B cell (primary cell): ENCODE measurements at regions of chr1 and their contacts with region 1.

Region 1: GRCh38 chr1:116556289-116557006 is 14.4 kb downstream of the CD58 start:
- DNase-seq: peak; percentile 65
- ATAC-seq: peak; percentile 76
- H3K4me3 ChIP-seq: peak overlapping the region in 1 of 5 experiments; percentile 26
- H3K4me3 Mint-ChIP-seq: peak overlapping the region; percentile 65
- H3K27ac ChIP-seq: peak overlapping the region; percentile 63 to 69
- H3K27ac Mint-ChIP-seq: peak overlapping the region; percentile 88
- H3K4me1 ChIP-seq: peaks cover 58 to 67% of the 10 kb centered on the region in 2 donors
- H3K4me1 Mint-ChIP-seq: peaks cover 82% of the 10 kb centered on the region
- H3K27me3 ChIP-seq: no peaks in the 10 kb centered on the region
- H3K27me3 Mint-ChIP-seq: no peaks in the 10 kb centered on the region
- CTCF ChIP-seq: no peak

Region 2: DNA sequence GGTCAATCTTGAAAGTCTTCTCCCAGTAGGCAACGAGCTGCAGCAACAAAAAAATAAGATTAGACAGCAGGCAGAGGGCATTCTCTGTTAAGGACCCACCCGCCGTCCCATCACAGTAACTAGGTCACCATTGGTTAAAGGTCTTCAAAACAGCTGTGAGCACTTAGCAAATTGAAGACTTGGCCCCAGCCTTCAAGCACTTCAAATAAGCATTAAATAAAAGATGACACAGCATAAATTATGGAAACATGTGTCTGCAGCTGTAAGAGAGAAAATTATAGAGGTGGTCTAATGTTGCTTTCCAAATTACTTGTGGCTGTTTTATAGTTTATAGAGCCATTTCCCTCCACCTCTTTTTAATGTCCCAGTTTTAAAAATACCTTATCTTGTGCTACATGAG is 853.5 kb before region 1 on chr1:
- CTCF ChIA-PET with region 1: no interaction called
- POLR2A ChIA-PET with region 1: no interaction called
- intact Hi-C with region 1: no loop called
- DNase-seq: no peak
- ATAC-seq: no peak
- H3K4me3 ChIP-seq: no peak overlapping the region
- H3K4me3 Mint-ChIP-seq: no peak overlapping the region
- H3K27ac ChIP-seq: no peak overlapping the region
- H3K27ac Mint-ChIP-seq: no peak overlapping the region
- H3K4me1 ChIP-seq: no peaks in the 10 kb centered on the region
- H3K4me1 Mint-ChIP-seq: no peaks in the 10 kb centered on the region
- H3K27me3 ChIP-seq: no peaks in the 10 kb centered on the region
- H3K27me3 Mint-ChIP-seq: peaks cover 8% of the 10 kb centered on the region
- CTCF ChIP-seq: no peak

Region 3: DNA sequence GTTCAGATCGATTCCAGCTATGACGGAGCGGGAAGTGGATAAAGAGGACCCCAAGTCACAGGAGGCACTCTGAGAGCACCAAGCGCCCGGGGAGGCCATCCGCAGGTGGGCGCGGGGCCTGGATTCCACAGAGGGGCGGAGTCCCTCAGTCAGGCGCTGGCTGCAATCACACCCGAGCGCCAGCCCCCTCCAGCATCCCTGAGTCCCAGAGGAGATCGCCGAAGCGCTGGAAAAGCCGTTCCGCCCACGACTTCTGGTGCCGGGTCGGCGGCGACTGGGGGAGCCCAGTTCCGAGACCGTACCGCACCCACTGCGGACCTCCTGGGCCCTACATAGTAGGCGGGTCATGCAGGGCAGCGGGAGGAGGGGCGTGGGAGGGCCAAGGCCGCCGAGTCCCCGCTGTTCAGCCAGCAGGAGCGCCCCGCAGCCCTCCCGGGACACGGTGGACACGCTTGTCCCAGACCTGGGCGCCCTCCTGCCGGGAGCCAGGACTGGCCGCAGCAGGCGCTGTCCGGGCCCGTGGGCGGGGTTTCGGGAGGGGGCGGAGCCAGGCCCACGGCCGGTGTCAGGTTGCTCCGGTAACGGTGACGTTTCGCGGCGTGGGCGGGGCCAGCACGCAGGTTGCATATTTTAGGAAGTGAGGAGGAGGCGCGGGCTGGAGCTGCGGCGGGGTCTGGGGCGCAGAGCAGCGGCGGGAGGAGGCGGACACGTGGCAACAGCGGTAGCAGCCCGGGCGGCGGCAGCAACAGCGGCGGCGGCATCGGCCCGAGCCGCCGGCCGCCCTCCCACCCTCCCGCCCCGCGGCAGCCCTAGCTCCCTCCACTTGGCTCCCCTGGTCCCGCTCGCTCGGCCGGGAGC is 183.6 kb before region 1 on chr1 and contains the start of gene ATP1A1:
- CTCF ChIA-PET with region 1: no interaction called
- POLR2A ChIA-PET with region 1: no interaction called
- intact Hi-C with region 1: loop called (anchors 5 kb)
- DNase-seq: peak; percentile 99
- ATAC-seq: peak; percentile 79
- H3K4me3 ChIP-seq: peak within 1 kb of the TSS; percentile 46 to 90 (median 84)
- H3K4me3 Mint-ChIP-seq: peak within 1 kb of the TSS; percentile 96
- H3K27ac ChIP-seq: peak within 1 kb of the TSS; percentile 81 to 91
- H3K27ac Mint-ChIP-seq: peak within 1 kb of the TSS; percentile 96
- H3K4me1 ChIP-seq: peaks cover 39 to 44% of the 10 kb centered on the region in 2 donors
- H3K4me1 Mint-ChIP-seq: peaks cover 37% of the 10 kb centered on the region
- H3K27me3 ChIP-seq: peaks cover 0 to 7% (median 3%) of the 10 kb centered on the region in 4 experiments
- H3K27me3 Mint-ChIP-seq: peaks cover 20% of the 10 kb centered on the region
- CTCF ChIP-seq: no peak
- total RNA-seq, gene ATP1A1: 101 and 107 TPM in 2 replicates

Region 4: GRCh38 chr1:116418091-116418830 is 138.2 kb before region 1 on chr1:
- CTCF ChIA-PET with region 1: no interaction called
- POLR2A ChIA-PET with region 1: no interaction called
- intact Hi-C with region 1: loop called (anchors 10 kb)
- DNase-seq: peak; percentile 92
- ATAC-seq: peak; percentile 95
- H3K4me3 ChIP-seq: peak overlapping the region; percentile 66 to 86 (median 84)
- H3K4me3 Mint-ChIP-seq: peak overlapping the region; percentile 86
- H3K27ac ChIP-seq: peak overlapping the region; percentile 62 to 80
- H3K27ac Mint-ChIP-seq: peak overlapping the region; percentile 91
- H3K4me1 ChIP-seq: peaks cover 16 to 20% of the 10 kb centered on the region in 2 donors
- H3K4me1 Mint-ChIP-seq: peaks cover 26% of the 10 kb centered on the region
- H3K27me3 ChIP-seq: no peaks in the 10 kb centered on the region
- H3K27me3 Mint-ChIP-seq: peaks cover 4% of the 10 kb centered on the region
- CTCF ChIP-seq: no peak

Region 5: GRCh38 chr1:116472431-116472961 is 84.0 kb before region 1 on chr1:
- CTCF ChIA-PET with region 1: no interaction called
- POLR2A ChIA-PET with region 1: no interaction called
- intact Hi-C with region 1: no loop called
- DNase-seq: no peak
- ATAC-seq: no peak
- H3K4me3 ChIP-seq: no peak overlapping the region
- H3K4me3 Mint-ChIP-seq: no peak overlapping the region
- H3K27ac ChIP-seq: no peak overlapping the region
- H3K27ac Mint-ChIP-seq: no peak overlapping the region
- H3K4me1 ChIP-seq: no peaks in the 10 kb centered on the region
- H3K4me1 Mint-ChIP-seq: no peaks in the 10 kb centered on the region
- H3K27me3 ChIP-seq: no peaks in the 10 kb centered on the region
- H3K27me3 Mint-ChIP-seq: no peaks in the 10 kb centered on the region
- CTCF ChIP-seq: no peak

Region 6: GRCh38 chr1:116504308-116505156 is 51.9 kb before region 1 on chr1:
- CTCF ChIA-PET with region 1: interaction called, 4 read pairs
- POLR2A ChIA-PET with region 1: interaction called, 6 read pairs
- intact Hi-C with region 1: loop called (anchors 5 kb)
- DNase-seq: peak; percentile 89
- ATAC-seq: peak; percentile 98
- H3K4me3 ChIP-seq: no peak overlapping the region
- H3K4me3 Mint-ChIP-seq: peak overlapping the region; percentile 50
- H3K27ac ChIP-seq: peak overlapping the region; percentile 66 to 77
- H3K27ac Mint-ChIP-seq: peak overlapping the region; percentile 83
- H3K4me1 ChIP-seq: peaks cover 24 to 31% of the 10 kb centered on the region in 2 donors
- H3K4me1 Mint-ChIP-seq: peaks cover 45% of the 10 kb centered on the region
- H3K27me3 ChIP-seq: no peaks in the 10 kb centered on the region
- H3K27me3 Mint-ChIP-seq: no peaks in the 10 kb centered on the region
- CTCF ChIP-seq: no peak

Region 7: GRCh38 chr1:116514708-116515525 is 41.5 kb before region 1 on chr1:
- CTCF ChIA-PET with region 1: no interaction called
- POLR2A ChIA-PET with region 1: interaction called, 3 read pairs
- intact Hi-C with region 1: loop called (anchors 5 kb)
- DNase-seq: peak; percentile 67
- ATAC-seq: peak; percentile 71
- H3K4me3 ChIP-seq: peak overlapping the region in 3 of 5 experiments; percentile 1 to 47 (median 9)
- H3K4me3 Mint-ChIP-seq: peak overlapping the region; percentile 83
- H3K27ac ChIP-seq: peak overlapping the region; percentile 72 to 86
- H3K27ac Mint-ChIP-seq: peak overlapping the region; percentile 96
- H3K4me1 ChIP-seq: peaks cover 20 to 26% of the 10 kb centered on the region in 2 donors
- H3K4me1 Mint-ChIP-seq: peaks cover 47% of the 10 kb centered on the region
- H3K27me3 ChIP-seq: no peaks in the 10 kb centered on the region
- H3K27me3 Mint-ChIP-seq: no peaks in the 10 kb centered on the region
- CTCF ChIP-seq: no peak

Region 8: GRCh38 chr1:116525440-116525839 is 31.0 kb before region 1 on chr1:
- CTCF ChIA-PET with region 1: no interaction called
- POLR2A ChIA-PET with region 1: no interaction called
- intact Hi-C with region 1: no loop called
- DNase-seq: no peak
- ATAC-seq: no peak
- H3K4me3 ChIP-seq: no peak overlapping the region
- H3K4me3 Mint-ChIP-seq: no peak overlapping the region
- H3K27ac ChIP-seq: no peak overlapping the region
- H3K27ac Mint-ChIP-seq: no peak overlapping the region
- H3K4me1 ChIP-seq: no peaks in the 10 kb centered on the region
- H3K4me1 Mint-ChIP-seq: no peaks in the 10 kb centered on the region
- H3K27me3 ChIP-seq: no peaks in the 10 kb centered on the region
- H3K27me3 Mint-ChIP-seq: no peaks in the 10 kb centered on the region
- CTCF ChIP-seq: no peak

Region 9: GRCh38 chr1:116544588-116545358 is 11.7 kb before region 1 on chr1:
- CTCF ChIA-PET with region 1: interaction called, 7 read pairs
- POLR2A ChIA-PET with region 1: no interaction called
- intact Hi-C with region 1: loop called (anchors 2 kb)
- DNase-seq: peak; percentile 41
- ATAC-seq: peak; percentile 53
- H3K4me3 ChIP-seq: no peak overlapping the region
- H3K4me3 Mint-ChIP-seq: peak overlapping the region; percentile 73
- H3K27ac ChIP-seq: peak overlapping the region; percentile 45 to 63
- H3K27ac Mint-ChIP-seq: peak overlapping the region; percentile 93
- H3K4me1 ChIP-seq: peaks cover 25 to 33% of the 10 kb centered on the region in 2 donors
- H3K4me1 Mint-ChIP-seq: peaks cover 69% of the 10 kb centered on the region
- H3K27me3 ChIP-seq: no peaks in the 10 kb centered on the region
- H3K27me3 Mint-ChIP-seq: no peaks in the 10 kb centered on the region
- CTCF ChIP-seq: no peak

Region 10: DNA sequence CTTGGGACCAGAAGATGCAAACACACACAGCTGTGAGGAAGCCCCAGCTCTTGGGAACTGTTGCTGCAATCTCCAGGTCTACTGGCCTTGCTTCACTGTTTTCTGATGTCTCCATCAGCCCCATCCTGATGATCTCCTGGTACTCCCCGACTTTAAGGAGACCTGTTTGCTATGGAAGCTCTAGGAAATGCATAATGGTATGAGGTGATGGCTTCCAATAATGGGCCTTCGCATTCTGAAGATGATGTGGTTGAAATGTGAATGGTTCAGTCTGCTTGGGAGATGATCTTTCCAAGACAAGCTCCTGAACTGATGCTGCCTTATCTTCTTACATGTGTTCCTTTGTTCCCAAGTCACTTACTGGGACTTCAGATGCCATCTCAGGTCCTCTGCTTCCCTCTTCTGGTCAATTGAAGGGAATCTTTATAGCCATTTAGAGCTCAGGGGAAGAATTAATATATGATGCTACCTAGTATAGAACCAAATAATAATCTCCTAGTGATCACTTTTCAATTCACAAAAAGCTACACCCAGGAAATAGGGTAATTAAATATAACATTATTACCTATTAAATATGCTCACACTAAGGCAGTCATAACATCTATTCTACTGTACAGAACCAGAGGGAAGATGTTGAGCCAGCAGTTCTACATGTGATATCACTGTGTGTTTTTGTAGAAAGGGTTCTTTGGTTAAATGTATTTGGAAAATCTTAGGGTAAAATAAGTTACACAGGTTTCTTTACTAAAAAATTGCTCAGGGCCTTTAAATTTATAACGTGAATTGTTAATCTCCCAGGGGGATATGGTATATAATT is 728.2 kb after region 1 on chr1:
- CTCF ChIA-PET with region 1: no interaction called
- POLR2A ChIA-PET with region 1: no interaction called
- intact Hi-C with region 1: no loop called
- DNase-seq: no peak
- ATAC-seq: no peak
- H3K4me3 ChIP-seq: no peak overlapping the region
- H3K4me3 Mint-ChIP-seq: no peak overlapping the region
- H3K27ac ChIP-seq: no peak overlapping the region
- H3K27ac Mint-ChIP-seq: no peak overlapping the region
- H3K4me1 ChIP-seq: no peaks in the 10 kb centered on the region
- H3K4me1 Mint-ChIP-seq: no peaks in the 10 kb centered on the region
- H3K27me3 ChIP-seq: peaks cover 0 to 2% (median 0%) of the 10 kb centered on the region in 4 experiments
- H3K27me3 Mint-ChIP-seq: peaks cover 10% of the 10 kb centered on the region
- CTCF ChIP-seq: no peak